Cardiac septum (tissue), 1 donor: ENCODE measurements at regions of chr4 and their contacts with region 1.

Region 1: GRCh38 chr4:165464813-165465381 is 86.1 kb downstream of the CPE start:
- DNase-seq: no peak

Region 2: DNA sequence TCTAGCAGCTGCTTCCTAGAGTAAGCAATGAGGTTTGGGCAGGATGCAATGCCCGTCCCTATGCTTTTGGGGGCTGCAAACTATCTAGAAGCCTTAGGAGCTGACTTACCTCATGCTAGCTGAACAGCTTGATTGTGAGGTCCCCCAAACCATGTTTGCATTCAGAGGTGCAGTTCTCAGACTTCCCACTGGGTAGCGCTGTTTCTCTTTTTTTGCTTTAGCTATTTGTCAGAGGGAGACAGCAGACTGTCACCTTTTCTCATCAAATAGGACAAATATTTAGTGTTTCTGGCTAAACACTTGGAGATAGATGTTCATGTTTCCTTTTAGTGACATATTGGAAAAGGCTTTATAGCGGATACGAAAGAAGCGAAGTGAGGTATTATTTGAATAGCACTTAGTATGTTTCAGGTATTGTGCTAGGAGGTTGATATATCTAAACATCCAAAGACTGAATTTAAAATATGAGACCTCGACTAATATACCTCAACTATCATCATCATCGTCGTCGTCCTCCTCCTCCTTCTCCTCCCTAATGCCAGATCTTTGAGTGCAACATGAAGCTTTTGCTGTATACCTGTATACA is 333.6 kb before region 1 on chr4:
- intact Hi-C with region 1: loop called (anchors 2 kb)
- DNase-seq: no peak

Region 3: GRCh38 chr4:165355900-165356300 is 109.0 kb before region 1 on chr4:
- intact Hi-C with region 1: loop called (anchors 5 kb)
- DNase-seq: no peak

Region 4: GRCh38 chr4:165384598-165384997 is 80.3 kb before region 1 on chr4:
- intact Hi-C with region 1: loop called (anchors 5 kb)
- DNase-seq: no peak